A673 (cell line): ENCODE measurements at regions of chr2 and their contacts with region 1.

Region 1: GRCh38 chr2:102806250-102806837 is 44.5 kb downstream of the TMEM182 start:
- DNase-seq: peak; percentile 58
- H3K4me3 ChIP-seq: no peak overlapping the region
- H3K27ac ChIP-seq: no peak overlapping the region
- H3K4me1 ChIP-seq: no peaks in the 10 kb centered on the region
- H3K27me3 ChIP-seq: no peaks in the 10 kb centered on the region
- CTCF ChIP-seq: peak; percentile 78

Region 2: GRCh38 chr2:102520028-102520427 is 286.3 kb before region 1 on chr2:
- CTCF ChIA-PET with region 1: no interaction called
- POLR2A ChIA-PET with region 1: no interaction called
- intact Hi-C with region 1: loop called (anchors 10 kb)
- DNase-seq: peak; percentile 55
- H3K4me3 ChIP-seq: no peak overlapping the region
- H3K27ac ChIP-seq: no peak overlapping the region
- H3K4me1 ChIP-seq: no peaks in the 10 kb centered on the region
- H3K27me3 ChIP-seq: no peaks in the 10 kb centered on the region
- CTCF ChIP-seq: peak; percentile 73

Region 3: GRCh38 chr2:102753563-102754159 is 52.7 kb before region 1 on chr2:
- CTCF ChIA-PET with region 1: interaction called, 18 read pairs
- POLR2A ChIA-PET with region 1: no interaction called
- intact Hi-C with region 1: loop called (anchors 1 kb)
- DNase-seq: peak; percentile 75
- H3K4me3 ChIP-seq: no peak overlapping the region
- H3K27ac ChIP-seq: no peak overlapping the region
- H3K4me1 ChIP-seq: no peaks in the 10 kb centered on the region
- H3K27me3 ChIP-seq: no peaks in the 10 kb centered on the region
- CTCF ChIP-seq: peak; percentile 79